HAP-1 (cell line): ENCODE measurements at regions of chrX and their contacts with region 1.

Region 1: GRCh38 chrX:131677655-131678628 is 134.1 kb downstream of the OR13H1 start:
- DNase-seq: peak; percentile 57 to 77
- H3K4me3 ChIP-seq: no peak overlapping the region
- H3K4me1 ChIP-seq: no peaks in the 10 kb centered on the region
- H3K27me3 ChIP-seq: no peaks in the 10 kb centered on the region

Region 2: GRCh38 chrX:130984782-130985181 is 693.2 kb before region 1 on chrX:
- in situ Hi-C with region 1: loop called (anchors 10 kb)
- DNase-seq: no peak
- H3K4me3 ChIP-seq: no peak overlapping the region
- H3K4me1 ChIP-seq: no peaks in the 10 kb centered on the region
- H3K27me3 ChIP-seq: no peaks in the 10 kb centered on the region